Uterus (tissue), 4 donors: ENCODE measurements at regions of chr22 and their contacts with region 1.

Region 1: GRCh38 chr22:37199760-37200108 is 11.7 kb upstream of the C1QTNF6 start:
- DNase-seq: no peak
- H3K4me3 ChIP-seq: peak overlapping the region; percentile 13 to 28
- H3K27ac ChIP-seq: peak overlapping the region; percentile 85 to 96
- H3K4me1 ChIP-seq: peaks cover 20% of the 10 kb centered on the region in 2 donors
- H3K27me3 ChIP-seq: no peaks in the 10 kb centered on the region
- CTCF ChIP-seq: no peak
- POLR2A ChIP-seq: no peak

Region 2: GRCh38 chr22:37133304-37134018 is 66.3 kb before region 1 on chr22:
- intact Hi-C with region 1: no loop called
- DNase-seq: no peak
- H3K4me3 ChIP-seq: no peak overlapping the region
- H3K27ac ChIP-seq: no peak overlapping the region
- H3K4me1 ChIP-seq: no peaks in the 10 kb centered on the region
- H3K27me3 ChIP-seq: no peaks in the 10 kb centered on the region
- CTCF ChIP-seq: no peak
- POLR2A ChIP-seq: no peak

Region 3: GRCh38 chr22:37166675-37167066 is 33.1 kb before region 1 on chr22:
- intact Hi-C with region 1: loop called (anchors 5 kb)
- DNase-seq: peak; percentile 84 to 86
- H3K4me3 ChIP-seq: no peak overlapping the region
- H3K27ac ChIP-seq: peak overlapping the region in 1 of 2 donors; percentile 37
- H3K4me1 ChIP-seq: no peaks in the 10 kb centered on the region
- H3K27me3 ChIP-seq: no peaks in the 10 kb centered on the region
- CTCF ChIP-seq: peak; percentile 88 to 97 (median 93)
- POLR2A ChIP-seq: no peak